AG04449 (cell line): ENCODE measurements at regions of chr9 and their contacts with region 1.

Region 1: DNA sequence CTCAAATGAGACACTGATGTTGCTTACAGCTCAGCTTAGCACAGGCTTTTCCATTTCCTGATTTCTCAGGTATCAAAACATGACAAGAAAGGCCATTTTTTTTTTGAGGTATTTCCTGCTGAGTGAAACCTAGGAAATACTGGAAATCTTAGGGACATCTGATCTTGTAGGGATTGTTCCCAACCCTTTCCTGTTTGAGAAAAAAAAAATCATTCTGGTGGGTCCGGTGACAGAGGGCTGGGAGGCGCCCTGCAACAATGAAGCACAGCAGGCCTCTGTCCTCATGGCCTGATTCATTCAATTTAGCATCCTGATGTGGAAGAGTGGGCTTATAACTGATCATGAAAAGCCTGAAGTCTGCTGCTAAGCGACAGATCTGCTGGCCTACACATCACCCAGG is 3.0 kb upstream of the C9orf153 start:
- DNase-seq: no peak
- H3K4me3 ChIP-seq: no peak overlapping the region
- CTCF ChIP-seq: no peak

Region 2: DNA sequence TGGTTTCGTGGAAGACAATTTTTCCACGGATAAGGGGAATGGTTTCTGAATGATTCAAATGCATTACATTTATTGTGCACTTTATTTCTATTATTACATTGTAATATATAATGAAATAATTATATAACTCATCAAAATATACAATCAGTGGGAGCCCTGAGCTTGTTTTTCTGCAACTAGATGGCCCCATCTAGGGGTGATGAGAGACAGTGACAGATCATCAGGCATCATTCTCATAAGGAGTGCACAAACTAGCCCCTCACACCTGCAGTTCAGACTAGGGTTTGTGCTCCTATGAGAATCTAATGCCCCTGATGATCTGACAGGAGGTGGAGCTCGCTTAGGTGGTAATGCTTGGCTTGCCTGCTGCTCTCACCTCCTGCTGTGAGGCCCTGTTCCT is 13.5 kb after region 1 on chr9:
- CTCF ChIA-PET with region 1: interaction called, 18 read pairs
- POLR2A ChIA-PET with region 1: no interaction called
- DNase-seq: no peak
- H3K4me3 ChIP-seq: no peak overlapping the region
- CTCF ChIP-seq: peak; percentile 17

Region 3: DNA sequence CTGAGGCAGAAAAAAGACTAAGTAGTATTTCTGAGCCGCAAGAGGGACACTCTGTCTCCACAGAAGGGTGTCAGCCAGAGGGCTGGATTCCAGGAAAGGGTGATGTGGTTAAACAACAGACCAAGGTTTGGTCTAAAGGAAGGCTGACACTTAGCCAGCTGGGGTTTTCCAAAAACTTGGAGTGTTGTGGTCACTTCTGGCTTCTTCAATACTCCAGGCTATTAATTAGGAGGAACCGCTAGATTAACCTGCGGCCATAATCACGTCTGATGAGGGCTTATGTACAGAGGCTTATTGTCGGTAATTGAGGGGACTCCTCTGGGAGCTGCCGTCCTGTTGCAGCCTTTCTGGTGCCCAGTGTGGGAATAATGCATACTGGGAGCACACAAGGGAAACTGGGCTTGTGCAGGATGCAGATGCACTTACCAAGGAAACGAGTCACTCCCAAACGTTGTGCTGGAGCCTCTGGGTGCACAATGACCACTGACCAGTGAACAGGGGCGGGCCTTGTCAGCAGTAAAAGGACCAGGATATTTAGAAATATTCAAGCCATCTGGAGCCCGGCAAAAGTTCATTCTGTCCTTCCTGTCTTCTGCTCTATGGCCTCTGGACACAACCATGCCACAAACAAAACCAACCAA is 161.9 kb after region 1 on chr9:
- CTCF ChIA-PET with region 1: no interaction called
- POLR2A ChIA-PET with region 1: no interaction called
- DNase-seq: no peak
- H3K4me3 ChIP-seq: no peak overlapping the region
- CTCF ChIP-seq: no peak